ENCODE measurements at regions of chr6 and their contacts with region 1.

Region 1: DNA sequence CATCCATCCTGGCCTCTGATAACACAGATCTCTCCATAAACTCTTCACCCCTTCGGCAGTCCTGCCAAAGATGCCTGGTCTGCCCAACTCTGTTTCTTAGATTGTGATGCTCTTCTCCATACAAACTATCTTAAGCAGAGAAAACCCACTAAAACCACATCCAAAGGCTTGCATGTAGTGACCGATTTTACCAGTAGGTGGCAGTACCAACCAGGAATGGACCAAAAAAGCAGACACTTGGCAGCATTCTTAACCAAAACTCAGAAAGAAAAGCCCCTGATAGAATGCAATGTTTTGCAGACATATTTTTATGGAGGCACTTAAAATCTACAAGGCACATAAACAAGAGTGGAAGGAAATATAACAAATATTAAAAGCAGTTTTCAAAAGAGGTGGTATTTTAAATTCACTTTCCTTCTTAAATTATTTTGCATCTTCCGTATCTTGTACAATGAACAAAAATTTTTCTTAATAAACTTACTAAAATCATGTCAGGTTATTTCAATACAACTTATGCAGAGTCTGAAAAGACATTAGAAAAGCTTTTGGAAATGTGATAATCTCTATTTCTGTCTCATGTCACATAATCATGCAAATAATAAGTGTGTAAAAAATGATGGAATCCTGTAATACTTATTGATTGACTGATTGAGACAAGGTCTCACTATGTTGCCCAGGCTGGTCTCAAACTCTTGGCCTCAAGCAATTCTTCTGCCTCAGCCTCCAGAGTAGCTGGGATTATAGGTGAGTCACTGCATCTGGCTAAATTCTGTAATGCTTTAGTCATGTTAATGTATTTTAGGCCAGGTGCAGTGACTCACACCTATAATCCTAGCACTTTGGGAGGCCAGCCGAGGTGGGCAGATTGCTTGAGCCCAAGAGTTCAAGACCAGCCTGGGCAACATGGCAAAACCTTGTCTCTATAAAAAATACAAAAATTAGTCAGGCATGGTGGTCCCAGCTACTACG is 29.4 kb downstream of the LRP11 start:
- DNase-seq: peak; percentile 70
- H3K4me3 Mint-ChIP-seq: no peak overlapping the region
- H3K27ac Mint-ChIP-seq: no peak overlapping the region
- H3K4me1 Mint-ChIP-seq: no peaks in the 10 kb centered on the region
- H3K27me3 Mint-ChIP-seq: no peaks in the 10 kb centered on the region
- CTCF ChIP-seq: peak; percentile 72

Region 2: GRCh38 chr6:149473080-149474052 is 361.4 kb before region 1 on chr6:
- CTCF ChIA-PET with region 1: no interaction called
- intact Hi-C with region 1: no loop called
- DNase-seq: no peak
- H3K4me3 Mint-ChIP-seq: peak overlapping the region; percentile 28
- H3K27ac Mint-ChIP-seq: no peak overlapping the region
- H3K4me1 Mint-ChIP-seq: no peaks in the 10 kb centered on the region
- H3K27me3 Mint-ChIP-seq: peaks cover 15% of the 10 kb centered on the region
- CTCF ChIP-seq: no peak

Region 3: DNA sequence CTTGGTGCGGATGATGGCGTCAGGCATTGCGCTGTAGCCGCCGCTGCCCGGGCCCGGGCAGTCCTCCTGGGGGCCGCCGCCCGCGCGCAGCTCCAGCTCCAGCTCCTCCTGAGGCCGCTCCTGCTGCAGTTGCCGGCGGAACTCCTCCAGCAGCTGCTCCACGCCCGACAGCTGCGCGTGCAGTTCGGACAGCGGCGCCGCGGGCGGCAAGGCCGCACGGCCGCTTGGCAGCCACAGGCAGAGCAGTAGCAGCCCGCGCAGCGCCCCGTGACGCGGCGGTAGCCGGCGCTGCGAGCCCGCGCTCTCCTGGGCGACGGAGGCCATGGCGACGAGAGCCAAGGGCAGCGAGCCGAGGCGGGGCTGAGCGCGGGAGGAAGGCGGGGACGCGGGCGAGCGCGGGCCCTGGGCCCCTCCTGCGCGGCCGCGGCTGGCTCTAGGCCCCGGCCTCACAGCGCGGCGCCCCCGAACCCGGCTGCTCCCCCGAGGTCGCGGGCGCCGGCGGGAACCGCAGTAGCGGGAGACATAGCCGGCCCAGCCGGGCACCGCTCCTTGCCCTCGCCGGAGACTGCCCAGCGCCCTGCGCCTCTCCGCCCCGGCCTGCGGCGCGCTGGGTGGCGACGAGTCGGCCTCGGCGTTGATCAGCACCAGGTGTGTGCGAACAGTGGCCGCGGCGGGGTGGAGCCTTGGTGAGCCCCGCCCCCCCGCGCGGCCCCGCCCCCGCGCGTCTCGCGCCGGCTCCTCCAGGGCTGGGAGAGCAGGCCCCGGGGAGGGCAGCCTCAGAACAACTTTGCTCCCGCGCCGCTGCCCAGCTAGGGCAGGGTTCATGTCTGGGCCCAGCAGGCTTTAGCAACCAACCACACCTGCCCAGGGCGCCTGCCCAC is 29.1 kb after region 1 on chr6 and contains the start of gene LRP11:
- CTCF ChIA-PET with region 1: interaction called, 3 read pairs
- intact Hi-C with region 1: loop called (anchors 5 kb)
- DNase-seq: peak; percentile 88
- H3K4me3 Mint-ChIP-seq: peak within 1 kb of the TSS; percentile 80
- H3K27ac Mint-ChIP-seq: peak within 1 kb of the TSS; percentile 82
- H3K4me1 Mint-ChIP-seq: peaks cover 38% of the 10 kb centered on the region
- H3K27me3 Mint-ChIP-seq: no peaks in the 10 kb centered on the region
- CTCF ChIP-seq: no peak
- total RNA-seq, gene LRP11: 27.4 and 31.1 TPM in 2 replicates

Region 4: GRCh38 chr6:150004783-150005717 is 170.3 kb after region 1 on chr6:
- CTCF ChIA-PET with region 1: no interaction called
- intact Hi-C with region 1: no loop called
- DNase-seq: peak; percentile 93
- H3K4me3 Mint-ChIP-seq: peak overlapping the region; percentile 84
- H3K27ac Mint-ChIP-seq: peak overlapping the region; percentile 69
- H3K4me1 Mint-ChIP-seq: peaks cover 7% of the 10 kb centered on the region
- H3K27me3 Mint-ChIP-seq: peaks cover 9% of the 10 kb centered on the region
- CTCF ChIP-seq: no peak

Region 5: GRCh38 chr6:150016324-150017185 is 181.8 kb after region 1 on chr6:
- CTCF ChIA-PET with region 1: no interaction called
- intact Hi-C with region 1: loop called (anchors 5 kb)
- DNase-seq: peak; percentile 43
- H3K4me3 Mint-ChIP-seq: no peak overlapping the region
- H3K27ac Mint-ChIP-seq: no peak overlapping the region
- H3K4me1 Mint-ChIP-seq: peaks cover 10% of the 10 kb centered on the region
- H3K27me3 Mint-ChIP-seq: peaks cover 49% of the 10 kb centered on the region
- CTCF ChIP-seq: no peak

Region 6: GRCh38 chr6:150177952-150178520 is 343.2 kb after region 1 on chr6:
- CTCF ChIA-PET with region 1: no interaction called
- intact Hi-C with region 1: no loop called
- DNase-seq: no peak
- H3K4me3 Mint-ChIP-seq: no peak overlapping the region
- H3K27ac Mint-ChIP-seq: no peak overlapping the region
- H3K4me1 Mint-ChIP-seq: peaks cover 9% of the 10 kb centered on the region
- H3K27me3 Mint-ChIP-seq: no peaks in the 10 kb centered on the region
- CTCF ChIP-seq: no peak

Measured in Calu3 (cell line).